ENCODE measurements at regions of chr3 and their contacts with region 1.

Region 1: GRCh38 chr3:132164469-132165092 is 129.8 kb upstream of the CPNE4 start:
- DNase-seq: peak; percentile 95
- ATAC-seq: peak; percentile 95
- H3K4me3 ChIP-seq: no peak overlapping the region
- H3K27ac ChIP-seq: peak overlapping the region; percentile 37
- H3K4me1 ChIP-seq: peaks cover 15% of the 10 kb centered on the region
- H3K27me3 ChIP-seq: no peaks in the 10 kb centered on the region
- CTCF ChIP-seq: no peak

Region 2: GRCh38 chr3:131591394-131592014 is 573.1 kb before region 1 on chr3:
- CTCF ChIA-PET with region 1: no interaction called
- POLR2A ChIA-PET with region 1: no interaction called
- intact Hi-C with region 1: no loop called
- DNase-seq: peak; percentile 47
- ATAC-seq: peak; percentile 84
- H3K4me3 ChIP-seq: no peak overlapping the region
- H3K27ac ChIP-seq: no peak overlapping the region
- H3K4me1 ChIP-seq: peaks cover 11% of the 10 kb centered on the region
- H3K27me3 ChIP-seq: no peaks in the 10 kb centered on the region
- CTCF ChIP-seq: no peak

Region 3: DNA sequence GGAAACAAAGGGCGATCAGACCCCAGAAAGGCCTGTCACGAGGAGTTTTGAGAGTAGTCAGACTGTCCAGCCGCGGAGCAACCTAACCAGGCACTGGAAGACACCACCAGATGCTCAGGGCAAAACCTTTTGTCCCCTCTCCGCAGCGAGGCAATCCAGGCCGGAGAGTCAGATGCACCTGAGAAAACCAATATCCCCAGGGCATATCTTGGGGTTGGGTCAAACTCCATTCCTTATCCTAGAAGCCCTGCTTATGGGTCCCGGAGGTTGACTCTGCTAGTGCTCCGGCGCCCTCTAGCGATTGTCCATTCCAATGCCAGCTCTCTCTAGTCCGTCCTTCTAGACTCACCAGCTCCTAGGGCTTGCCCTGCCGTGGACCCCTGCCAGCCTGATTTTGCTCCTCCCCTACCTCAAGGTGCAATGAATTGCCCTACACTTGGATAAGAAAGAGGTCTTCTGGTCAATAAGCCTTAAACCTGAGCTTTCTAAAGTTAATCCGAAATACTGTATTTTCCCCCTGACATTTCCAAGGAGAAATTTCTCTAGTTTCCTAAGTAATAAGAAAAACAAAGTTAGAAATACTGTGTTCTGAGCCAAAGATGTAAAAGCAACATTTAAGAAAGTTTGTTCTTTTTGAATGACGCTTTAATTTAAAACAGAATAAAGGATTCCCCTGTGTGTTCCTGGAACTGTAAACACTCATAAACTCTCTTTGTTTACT is 135.2 kb before region 1 on chr3:
- CTCF ChIA-PET with region 1: no interaction called
- POLR2A ChIA-PET with region 1: no interaction called
- intact Hi-C with region 1: no loop called
- DNase-seq: peak; percentile 94
- ATAC-seq: peak; percentile 98
- H3K4me3 ChIP-seq: peak overlapping the region; percentile 34
- H3K27ac ChIP-seq: peak overlapping the region; percentile 64
- H3K4me1 ChIP-seq: peaks cover 13% of the 10 kb centered on the region
- H3K27me3 ChIP-seq: no peaks in the 10 kb centered on the region
- CTCF ChIP-seq: peak; percentile 87

Region 4: GRCh38 chr3:132135628-132136333 is 28.8 kb before region 1 on chr3:
- CTCF ChIA-PET with region 1: interaction called, 3 read pairs
- POLR2A ChIA-PET with region 1: interaction called, 10 read pairs
- intact Hi-C with region 1: loop called (anchors 2 kb)
- DNase-seq: peak; percentile 93
- ATAC-seq: peak; percentile 96
- H3K4me3 ChIP-seq: peak overlapping the region; percentile 62
- H3K27ac ChIP-seq: peak overlapping the region; percentile 100
- H3K4me1 ChIP-seq: peaks cover 38% of the 10 kb centered on the region
- H3K27me3 ChIP-seq: no peaks in the 10 kb centered on the region
- CTCF ChIP-seq: no peak

Region 5: DNA sequence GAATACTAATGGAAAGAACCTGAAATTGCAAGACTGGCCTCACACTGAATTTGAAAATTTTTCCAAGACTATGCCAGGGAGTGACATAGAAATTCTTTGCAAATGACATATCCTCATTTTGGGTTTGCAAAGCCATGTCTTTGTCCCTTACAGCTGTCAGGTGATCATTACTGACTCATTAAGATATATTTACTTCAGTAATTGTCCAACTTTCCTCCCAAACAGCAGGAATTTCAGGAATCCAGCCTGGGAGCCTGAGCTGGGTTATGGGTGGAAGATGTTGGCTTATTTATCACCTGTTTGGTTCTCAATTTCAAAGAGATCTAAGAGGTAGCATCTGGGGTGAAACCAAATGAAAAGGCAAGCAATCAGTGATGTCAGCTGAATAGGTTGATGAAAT is 41.0 kb after region 1 on chr3:
- CTCF ChIA-PET with region 1: interaction called, 3 read pairs
- POLR2A ChIA-PET with region 1: no interaction called
- intact Hi-C with region 1: loop called (anchors 1 kb)
- DNase-seq: peak; percentile 49
- ATAC-seq: peak; percentile 15; the same call in 1 of the 2 replicates
- H3K4me3 ChIP-seq: no peak overlapping the region
- H3K27ac ChIP-seq: no peak overlapping the region
- H3K4me1 ChIP-seq: peaks cover 15% of the 10 kb centered on the region
- H3K27me3 ChIP-seq: no peaks in the 10 kb centered on the region
- CTCF ChIP-seq: no peak

Measured in PC-3 (cell line).